Stomach (tissue), 19 donors: ENCODE measurements at regions of chr6 and their contacts with region 1.

Region 1: DNA sequence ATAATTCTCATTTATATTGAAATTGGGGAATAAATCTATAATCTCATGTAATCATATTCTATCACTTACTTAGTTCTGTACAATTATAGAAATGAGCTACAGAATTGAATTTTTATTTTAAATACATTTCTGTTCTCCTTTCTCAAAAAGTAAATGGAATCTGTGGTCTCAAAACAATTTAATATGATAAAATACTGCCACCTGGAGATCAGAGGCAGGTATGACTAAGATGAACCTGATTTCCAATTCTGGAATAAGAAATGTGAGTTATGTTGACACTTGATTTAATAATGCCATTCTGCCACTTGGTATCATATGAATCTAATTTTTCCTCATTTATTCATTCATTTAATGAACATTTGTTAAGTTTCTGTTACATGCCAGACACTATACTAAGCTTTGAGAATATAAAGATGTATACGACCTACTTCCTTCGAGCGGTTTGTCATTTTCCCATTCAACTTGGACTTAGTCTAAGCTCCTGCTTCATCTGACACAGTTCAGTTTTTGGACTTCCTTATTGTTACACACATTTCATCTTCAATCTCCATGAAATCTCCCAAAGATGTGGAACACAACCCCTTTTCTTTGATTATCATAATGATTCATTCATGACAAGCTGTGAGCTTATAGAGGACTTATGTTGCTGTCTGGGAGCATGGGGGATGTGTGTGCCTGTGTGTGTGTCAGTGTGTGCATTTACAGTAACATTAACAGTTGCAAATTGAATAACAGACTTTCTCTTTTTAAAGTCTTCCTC is 7.5 kb upstream of the CCDC28A start:
- DNase-seq: peak in 1 of 2 donors; percentile 57
- H3K4me3 ChIP-seq: no peak overlapping the region
- H3K27ac ChIP-seq: no peak overlapping the region
- H3K4me1 ChIP-seq: no peaks in the 10 kb centered on the region
- H3K27me3 ChIP-seq: no peaks in the 10 kb centered on the region
- CTCF ChIP-seq: peak in 5 of 7 experiments; percentile 54 to 73 (median 62)
- EP300 ChIP-seq: no peak
- POLR2A ChIP-seq: no peak

Region 2: GRCh38 chr6:138597336-138597735 is 168.7 kb before region 1 on chr6:
- intact Hi-C with region 1: loop called (anchors 5 kb)
- DNase-seq: no peak
- H3K4me3 ChIP-seq: no peak overlapping the region
- H3K27ac ChIP-seq: no peak overlapping the region
- H3K4me1 ChIP-seq: peaks cover 0 to 20% (median 13%) of the 10 kb centered on the region in 4 donors
- H3K27me3 ChIP-seq: no peaks in the 10 kb centered on the region
- CTCF ChIP-seq: no peak
- EP300 ChIP-seq: no peak
- POLR2A ChIP-seq: no peak

Region 3: GRCh38 chr6:138923561-138923960 is 157.5 kb after region 1 on chr6:
- intact Hi-C with region 1: no loop called
- DNase-seq: no peak
- H3K4me3 ChIP-seq: no peak overlapping the region
- H3K27ac ChIP-seq: no peak overlapping the region
- H3K4me1 ChIP-seq: no peaks in the 10 kb centered on the region
- H3K27me3 ChIP-seq: no peaks in the 10 kb centered on the region
- CTCF ChIP-seq: no peak
- EP300 ChIP-seq: no peak
- POLR2A ChIP-seq: no peak